ENCODE measurements at regions of chr10 and their contacts with region 1.

Region 1: DNA sequence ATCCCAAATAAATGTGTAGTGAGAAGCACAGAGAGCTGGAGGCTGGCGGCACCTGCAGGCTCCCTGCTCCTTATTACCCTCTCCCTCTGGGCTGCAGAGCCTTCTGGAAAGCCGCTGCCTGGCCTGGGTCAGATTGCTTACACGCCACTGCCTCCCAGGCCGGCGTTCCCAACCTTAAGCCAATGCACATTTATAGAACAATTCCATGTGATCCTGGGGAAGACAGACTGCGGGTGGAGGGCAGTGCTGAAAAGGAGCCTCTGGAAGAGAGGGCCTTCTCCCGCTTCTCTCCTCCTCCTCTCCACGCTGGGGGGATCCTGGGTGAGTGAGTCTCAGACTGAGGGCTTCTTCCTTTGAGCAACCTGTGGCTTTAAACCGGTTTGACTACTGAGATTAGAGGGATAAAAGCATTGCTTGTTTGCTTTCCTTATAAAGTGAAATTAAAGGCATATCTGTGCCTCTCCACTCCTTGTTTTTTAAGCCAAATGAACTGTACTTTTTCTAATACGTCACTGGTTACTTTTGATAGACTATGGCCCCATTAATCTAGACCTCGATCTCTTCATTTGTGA is 5.5 kb downstream of the TACC2 start:
- DNase-seq: no peak

Region 2: GRCh38 chr10:121927841-121928527 is 66.5 kb before region 1 on chr10 and contains the start of gene ATE1:
- intact Hi-C with region 1: no loop called
- DNase-seq: peak; percentile 96
- total RNA-seq, gene ATE1: 25.6 to 32.4 TPM

Region 3: DNA sequence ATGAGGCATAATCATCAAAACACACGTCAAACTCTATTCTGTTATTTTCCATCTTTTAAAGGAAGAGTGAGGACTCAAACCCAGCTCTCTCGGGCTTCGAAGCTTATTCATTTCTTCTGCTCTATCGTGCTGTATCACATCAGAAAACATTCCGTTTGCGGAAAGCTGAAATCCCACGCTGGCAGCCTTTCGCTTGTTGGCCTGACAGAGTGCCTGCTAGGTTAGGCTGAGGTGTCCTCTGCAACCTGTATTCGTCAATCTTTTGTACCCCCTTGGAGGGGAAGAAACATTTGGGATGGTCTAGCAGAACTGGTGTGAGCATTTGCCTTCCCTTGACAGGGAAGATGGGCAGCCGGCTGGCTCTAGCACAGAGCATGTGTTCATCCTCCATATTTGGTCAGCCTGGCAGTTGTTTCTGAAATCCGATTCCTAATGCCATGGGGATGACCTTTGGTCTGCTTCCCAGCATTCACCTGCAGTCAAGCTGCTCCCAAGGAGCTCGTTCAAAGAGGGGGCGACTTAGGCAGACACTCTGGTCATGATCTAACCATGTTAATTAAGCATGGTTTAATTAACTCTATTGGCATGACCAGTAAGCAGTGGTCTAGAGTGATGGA is 49.7 kb after region 1 on chr10:
- intact Hi-C with region 1: loop called in 1 of 2 experiments (anchors 5 kb)
- DNase-seq: peak; percentile 58

Region 4: GRCh38 chr10:122879339-122880273 is 885.1 kb after region 1 on chr10 and contains the start of gene FAM24B:
- intact Hi-C with region 1: loop called in 1 of 2 experiments (anchors 5 kb)
- DNase-seq: peak; percentile 97
- total RNA-seq, gene FAM24B: 1.4 TPM

Measured in posterior vena cava (tissue), 2 donors.